K562 (cell line): ENCODE measurements at regions of chr7 and their contacts with region 1.

Region 1: DNA sequence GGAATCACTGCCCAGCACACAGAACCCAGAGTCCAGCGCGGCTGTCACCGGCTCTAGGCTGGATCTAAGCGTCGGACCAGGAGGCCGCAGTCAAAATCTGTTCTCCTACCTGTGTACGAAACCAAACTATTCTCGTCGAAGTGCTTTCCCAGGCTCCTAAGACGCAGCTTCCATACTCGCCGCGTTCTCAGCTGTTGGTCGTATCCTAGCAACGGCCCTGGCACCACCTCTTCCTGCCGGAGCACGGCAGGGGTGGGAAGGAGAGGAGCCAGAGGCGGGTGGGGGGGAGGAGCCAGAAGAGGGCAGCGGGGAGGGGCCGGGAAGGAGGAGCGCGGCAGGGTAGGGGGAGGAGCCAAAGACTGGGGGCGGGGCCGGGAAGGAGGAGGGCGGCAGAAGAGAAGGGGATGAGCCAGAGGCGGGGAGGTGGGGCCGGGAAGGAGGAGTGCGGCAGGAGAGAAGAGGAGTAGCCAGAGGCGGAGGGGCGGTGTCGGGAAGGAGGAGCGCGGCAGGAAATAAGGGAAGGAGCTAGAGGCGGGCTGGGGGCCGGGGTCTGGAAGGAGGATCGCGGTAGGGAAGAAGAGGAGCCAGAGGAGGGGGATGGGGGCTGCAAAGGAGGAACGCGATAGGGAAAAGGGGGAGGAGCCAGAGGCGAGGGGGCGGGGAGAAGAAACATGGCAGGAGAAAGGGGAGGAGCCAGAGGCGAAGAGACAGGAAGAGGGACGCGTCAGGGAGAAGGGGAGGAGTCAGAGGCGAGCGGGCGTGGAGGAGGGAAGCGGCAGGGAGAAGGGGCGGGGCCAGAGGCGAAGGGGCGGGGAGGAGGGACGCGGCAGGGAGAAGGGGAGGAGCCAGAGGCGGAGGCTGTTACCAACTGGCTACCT is at the start of gene IQUB:
- DNase-seq: peak; percentile 99
- ATAC-seq: peak; percentile 76
- H3K4me3 ChIP-seq: peak within 1 kb of the TSS; percentile 69
- H3K27ac ChIP-seq: peak within 1 kb of the TSS; percentile 86
- H3K4me1 ChIP-seq: peaks cover 9 to 19% of the 10 kb centered on the region in 2 experiments
- H3K27me3 ChIP-seq: no peaks in the 10 kb centered on the region
- CTCF ChIP-seq: no peak
- EP300 ChIP-seq: no peak
- POLR2A ChIP-seq: peak; percentile 93
- RAD21 ChIP-seq: no peak
- polyA plus RNA-seq, gene IQUB: 1.3 to 1.7 TPM

Region 2: DNA sequence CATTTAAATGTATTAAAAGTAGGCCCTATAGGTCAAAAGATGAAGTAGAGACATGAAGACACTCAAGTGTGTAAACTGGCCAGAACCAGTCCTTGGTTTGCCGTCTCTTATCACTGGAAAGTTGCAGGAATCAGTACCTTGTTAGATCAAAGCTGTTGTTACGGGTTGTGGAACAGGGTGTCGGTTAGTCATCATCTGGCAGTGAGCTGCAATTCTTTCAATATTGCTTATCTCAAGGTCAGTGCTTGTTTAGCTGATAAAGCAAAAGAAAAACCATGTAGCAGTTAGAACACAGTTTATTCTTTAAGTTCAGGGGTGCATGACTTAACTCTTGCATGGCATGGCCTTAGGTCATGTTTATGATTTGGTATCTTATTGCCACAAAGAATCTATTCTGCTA is 324.8 kb before region 1 on chr7:
- CTCF ChIA-PET with region 1: no interaction called
- POLR2A ChIA-PET with region 1: no interaction called
- in situ Hi-C with region 1: no loop called
- intact Hi-C with region 1: no loop called
- DNase-seq: no peak
- ATAC-seq: no peak
- H3K4me3 ChIP-seq: no peak overlapping the region
- H3K27ac ChIP-seq: no peak overlapping the region
- H3K4me1 ChIP-seq: no peaks in the 10 kb centered on the region
- H3K27me3 ChIP-seq: no peaks in the 10 kb centered on the region
- CTCF ChIP-seq: no peak
- EP300 ChIP-seq: no peak
- POLR2A ChIP-seq: no peak
- RAD21 ChIP-seq: no peak

Region 3: GRCh38 chr7:123548406-123548805 is 13.8 kb after region 1 on chr7:
- CTCF ChIA-PET with region 1: no interaction called
- POLR2A ChIA-PET with region 1: interaction called, 13 read pairs
- in situ Hi-C with region 1: no loop called
- intact Hi-C with region 1: no loop called
- DNase-seq: no peak
- ATAC-seq: peak; percentile 18; the same call in 1 of the 3 replicates
- H3K4me3 ChIP-seq: no peak overlapping the region
- H3K27ac ChIP-seq: peak overlapping the region; percentile 23; the same call in 2 of the 3 replicates
- H3K4me1 ChIP-seq: peaks cover under 1 to 9% of the 10 kb centered on the region in 2 experiments; a peak in 4 of 5 replicates
- H3K27me3 ChIP-seq: no peaks in the 10 kb centered on the region
- CTCF ChIP-seq: no peak
- EP300 ChIP-seq: no peak
- POLR2A ChIP-seq: no peak
- RAD21 ChIP-seq: no peak

Region 4: GRCh38 chr7:123624527-123625183 is 90.0 kb after region 1 on chr7:
- CTCF ChIA-PET with region 1: no interaction called
- POLR2A ChIA-PET with region 1: no interaction called
- in situ Hi-C with region 1: no loop called
- intact Hi-C with region 1: loop called (anchors 5 kb)
- DNase-seq: peak; percentile 76 to 93 (median 78)
- ATAC-seq: peak; percentile 91
- H3K4me3 ChIP-seq: no peak overlapping the region
- H3K27ac ChIP-seq: peak overlapping the region; percentile 11; the same call in 1 of the 3 replicates
- H3K4me1 ChIP-seq: peaks cover 0 to 6% of the 10 kb centered on the region in 2 experiments; a peak in 2 of 5 replicates
- H3K27me3 ChIP-seq: no peaks in the 10 kb centered on the region; a peak in 1 of 5 replicates
- CTCF ChIP-seq: peak; percentile 92 to 99 (median 97)
- EP300 ChIP-seq: 0 out of 2 replicates have a peak, but pooled peaks have one; percentile 29
- POLR2A ChIP-seq: no peak
- RAD21 ChIP-seq: peak; percentile 54 to 85